AG04449 (cell line): ENCODE measurements at regions of chr4 and their contacts with region 1.

Region 1: GRCh38 chr4:141346144-141346543 is 125.4 kb downstream of the ZNF330 start:
- DNase-seq: no peak
- H3K4me3 ChIP-seq: no peak overlapping the region
- CTCF ChIP-seq: peak; percentile 46

Region 2: DNA sequence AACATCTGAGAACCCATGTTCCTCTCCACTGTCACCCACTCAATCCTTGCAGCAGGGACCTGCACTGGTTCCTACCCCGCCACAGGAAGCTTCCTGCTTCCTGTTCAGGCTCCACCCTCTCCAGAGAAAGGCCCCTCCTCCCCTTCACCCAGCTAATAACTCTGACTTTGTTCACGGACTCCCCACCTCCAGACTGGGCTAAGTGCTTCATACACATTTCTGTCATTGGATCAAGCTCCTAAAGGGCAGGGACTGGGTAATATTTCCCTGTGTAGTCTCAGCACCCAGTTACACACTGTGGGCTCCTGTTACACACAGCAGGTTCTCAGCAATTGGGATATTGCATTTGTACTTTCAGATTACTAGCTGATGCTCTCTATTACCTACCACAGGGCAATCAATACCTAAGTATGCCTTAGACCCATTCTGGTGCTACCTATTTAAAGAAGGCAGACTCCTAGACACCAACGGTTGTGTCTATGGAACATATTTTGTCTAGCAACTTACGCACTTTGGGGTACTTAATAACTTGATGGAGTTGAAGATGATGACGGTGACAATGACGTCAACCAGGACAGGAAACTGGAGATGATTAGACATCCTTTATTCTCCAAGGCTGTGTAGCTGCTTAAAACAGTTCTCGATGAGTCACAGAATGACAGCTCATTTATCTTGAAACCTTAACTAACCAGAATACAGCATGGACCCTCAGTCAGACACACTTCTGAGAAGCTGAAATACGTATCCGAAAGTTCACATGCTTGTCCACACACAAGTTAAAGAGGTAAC is 1250.3 kb before region 1 on chr4:
- CTCF ChIA-PET with region 1: no interaction called
- POLR2A ChIA-PET with region 1: no interaction called
- DNase-seq: peak; percentile 77
- H3K4me3 ChIP-seq: no peak overlapping the region
- CTCF ChIP-seq: no peak

Region 3: GRCh38 chr4:141158219-141158618 is 187.9 kb before region 1 on chr4:
- CTCF ChIA-PET with region 1: interaction called, 10 read pairs
- POLR2A ChIA-PET with region 1: no interaction called
- DNase-seq: no peak
- H3K4me3 ChIP-seq: no peak overlapping the region
- CTCF ChIP-seq: peak; percentile 9

Region 4: DNA sequence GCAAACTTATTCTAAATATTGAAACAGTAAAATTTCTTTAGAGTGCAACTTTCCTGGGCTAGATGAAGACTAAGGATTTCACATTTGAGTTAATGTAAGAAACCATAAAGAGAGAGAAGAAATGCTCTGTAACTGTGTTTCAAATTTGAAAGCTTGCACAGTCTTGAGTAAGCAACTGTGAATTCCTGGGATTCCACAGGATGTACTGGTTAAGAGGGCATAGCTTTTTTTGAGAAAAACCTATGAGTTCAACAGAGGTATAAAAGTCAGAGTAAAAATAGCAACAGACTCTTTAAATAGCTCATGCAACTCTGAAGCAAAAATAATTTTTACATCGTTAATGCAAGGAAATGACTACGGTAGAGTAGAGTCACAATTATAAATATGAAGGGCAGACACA is 99.9 kb before region 1 on chr4:
- CTCF ChIA-PET with region 1: no interaction called
- POLR2A ChIA-PET with region 1: no interaction called
- DNase-seq: peak; percentile 61
- H3K4me3 ChIP-seq: no peak overlapping the region
- CTCF ChIP-seq: no peak

Region 5: GRCh38 chr4:141329174-141329569 is 17.0 kb before region 1 on chr4:
- CTCF ChIA-PET with region 1: interaction called, 32 read pairs
- POLR2A ChIA-PET with region 1: no interaction called
- DNase-seq: peak; percentile 65
- H3K4me3 ChIP-seq: no peak overlapping the region
- CTCF ChIP-seq: no peak

Region 6: GRCh38 chr4:141645611-141646340 is 299.6 kb after region 1 on chr4:
- CTCF ChIA-PET with region 1: interaction called, 10 read pairs
- POLR2A ChIA-PET with region 1: no interaction called
- DNase-seq: peak; percentile 85
- H3K4me3 ChIP-seq: no peak overlapping the region
- CTCF ChIP-seq: no peak

Region 7: GRCh38 chr4:141702472-141703182 is 356.5 kb after region 1 on chr4:
- CTCF ChIA-PET with region 1: interaction called, 10 read pairs
- POLR2A ChIA-PET with region 1: no interaction called
- DNase-seq: no peak
- H3K4me3 ChIP-seq: no peak overlapping the region
- CTCF ChIP-seq: no peak

Region 8: DNA sequence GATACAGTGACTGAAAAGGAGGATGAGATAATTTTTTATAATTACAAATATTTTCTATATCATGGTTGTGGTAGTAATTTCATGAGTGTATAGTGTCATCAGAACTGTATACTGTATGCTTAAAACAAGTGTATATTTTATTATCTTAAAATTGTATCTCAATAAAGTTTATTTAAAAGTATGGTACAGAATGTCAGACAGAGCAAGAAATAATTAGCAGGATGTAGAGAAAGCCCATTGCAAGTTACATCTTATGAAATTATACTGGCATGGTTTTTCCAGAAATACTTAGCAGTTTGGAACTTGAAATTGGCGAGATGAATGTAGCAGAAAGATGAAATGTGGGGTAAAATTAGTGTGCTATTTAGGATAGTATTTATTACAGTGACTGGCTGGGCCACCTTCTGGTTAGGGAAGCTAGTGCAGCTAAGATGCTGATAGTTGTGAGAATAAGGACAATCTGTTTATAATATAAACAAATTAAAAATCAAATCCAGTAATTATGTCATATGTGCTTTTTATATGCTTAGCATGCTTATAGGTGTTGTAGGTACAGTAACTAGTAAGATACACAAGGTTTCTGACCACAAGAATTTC is 365.0 kb after region 1 on chr4:
- CTCF ChIA-PET with region 1: interaction called, 23 read pairs
- POLR2A ChIA-PET with region 1: no interaction called
- DNase-seq: no peak
- H3K4me3 ChIP-seq: no peak overlapping the region
- CTCF ChIP-seq: peak; percentile 59